ENCODE measurements at regions of chr2 and their contacts with region 1.

Region 1: DNA sequence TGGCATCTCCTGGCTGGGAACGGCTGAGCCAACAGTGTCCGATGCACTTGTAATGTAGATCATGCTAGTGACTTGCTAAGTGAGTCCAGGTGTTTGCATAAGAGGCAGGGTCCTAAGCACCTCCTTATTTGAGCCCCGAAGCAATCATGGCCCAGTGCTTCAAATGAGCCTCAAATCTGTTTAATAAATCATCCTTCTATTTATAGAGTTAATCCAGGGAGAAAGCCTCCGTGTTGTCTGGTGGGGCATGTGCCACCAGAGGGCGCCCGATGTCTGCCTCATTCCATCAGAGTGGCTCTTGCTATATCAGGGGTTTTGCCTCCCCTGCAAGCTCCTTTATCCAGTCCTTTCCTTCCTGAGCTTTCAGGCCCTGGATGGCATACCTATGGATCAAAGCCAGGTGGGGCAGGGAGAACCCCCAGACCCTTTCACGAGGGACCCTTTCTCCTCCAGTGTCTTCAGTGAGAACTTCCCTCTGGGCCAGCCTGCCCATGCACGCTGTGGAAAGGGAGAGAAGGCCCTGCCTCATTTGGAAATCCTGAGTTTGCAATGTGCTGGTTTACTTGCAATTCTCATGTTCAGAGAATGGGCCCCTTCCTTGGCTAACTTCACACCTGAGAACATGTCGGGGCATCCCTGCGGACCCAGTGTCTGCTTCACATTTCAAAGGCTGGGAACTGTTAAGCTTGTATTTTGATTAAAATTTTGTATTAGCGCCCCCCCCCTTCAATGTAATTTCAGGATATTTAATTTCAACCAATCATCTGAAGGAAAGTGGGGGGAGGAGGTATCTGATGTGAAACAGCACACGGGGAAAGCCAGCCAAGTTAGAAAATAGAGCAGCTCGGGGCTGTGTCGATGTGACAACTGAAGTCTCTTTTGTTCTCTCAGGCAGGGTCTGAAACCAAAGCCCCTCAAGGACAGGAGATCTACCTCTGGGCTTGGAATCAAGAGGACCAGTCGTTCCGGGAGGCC is 39.7 kb downstream of the RDH14 start:
- DNase-seq: peak; percentile 83
- H3K4me3 Mint-ChIP-seq: no peak overlapping the region
- H3K27ac Mint-ChIP-seq: no peak overlapping the region
- H3K4me1 Mint-ChIP-seq: peaks cover 10% of the 10 kb centered on the region
- H3K27me3 Mint-ChIP-seq: peaks cover 56% of the 10 kb centered on the region
- CTCF ChIP-seq: peak; percentile 89

Region 2: GRCh38 chr2:16625201-16625729 is 1895.5 kb before region 1 on chr2:
- CTCF ChIA-PET with region 1: no interaction called
- intact Hi-C with region 1: no loop called
- DNase-seq: no peak
- H3K4me3 Mint-ChIP-seq: no peak overlapping the region
- H3K27ac Mint-ChIP-seq: no peak overlapping the region
- H3K4me1 Mint-ChIP-seq: peaks cover 11% of the 10 kb centered on the region
- H3K27me3 Mint-ChIP-seq: peaks cover 71% of the 10 kb centered on the region
- CTCF ChIP-seq: no peak

Region 3: DNA sequence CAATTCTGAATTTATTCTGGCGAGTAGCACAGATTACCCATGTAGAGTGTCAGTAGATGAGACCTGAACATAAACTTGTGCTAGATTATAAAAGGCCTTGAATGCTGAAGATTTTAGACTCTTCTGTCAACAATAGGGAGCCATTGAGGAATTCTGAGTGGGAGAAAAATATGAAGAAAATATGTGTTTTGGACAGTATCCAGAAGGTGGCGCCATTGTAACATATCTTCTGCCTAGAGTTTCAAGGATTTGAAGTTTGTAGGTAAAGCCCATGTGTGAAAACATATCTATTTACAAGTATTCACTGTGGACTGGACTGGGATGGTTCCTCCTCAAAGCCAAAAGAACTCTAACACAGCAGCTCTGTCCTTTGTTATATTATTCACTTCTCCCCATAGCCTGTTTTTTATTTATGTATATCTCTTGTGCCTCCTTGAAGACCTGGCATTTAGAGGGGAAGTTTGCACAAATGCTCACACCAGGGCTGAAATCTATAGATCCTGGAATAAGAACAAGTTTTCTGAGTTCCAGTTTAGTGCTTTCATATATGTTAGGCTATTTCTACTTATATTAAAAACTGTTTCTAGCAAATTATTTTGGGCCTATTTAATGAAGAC is 85.2 kb before region 1 on chr2:
- CTCF ChIA-PET with region 1: no interaction called
- intact Hi-C with region 1: loop called (anchors 5 kb)
- DNase-seq: peak; percentile 46
- H3K4me3 Mint-ChIP-seq: no peak overlapping the region
- H3K27ac Mint-ChIP-seq: no peak overlapping the region
- H3K4me1 Mint-ChIP-seq: no peaks in the 10 kb centered on the region
- H3K27me3 Mint-ChIP-seq: peaks cover 43% of the 10 kb centered on the region
- CTCF ChIP-seq: peak; percentile 59

Region 4: DNA sequence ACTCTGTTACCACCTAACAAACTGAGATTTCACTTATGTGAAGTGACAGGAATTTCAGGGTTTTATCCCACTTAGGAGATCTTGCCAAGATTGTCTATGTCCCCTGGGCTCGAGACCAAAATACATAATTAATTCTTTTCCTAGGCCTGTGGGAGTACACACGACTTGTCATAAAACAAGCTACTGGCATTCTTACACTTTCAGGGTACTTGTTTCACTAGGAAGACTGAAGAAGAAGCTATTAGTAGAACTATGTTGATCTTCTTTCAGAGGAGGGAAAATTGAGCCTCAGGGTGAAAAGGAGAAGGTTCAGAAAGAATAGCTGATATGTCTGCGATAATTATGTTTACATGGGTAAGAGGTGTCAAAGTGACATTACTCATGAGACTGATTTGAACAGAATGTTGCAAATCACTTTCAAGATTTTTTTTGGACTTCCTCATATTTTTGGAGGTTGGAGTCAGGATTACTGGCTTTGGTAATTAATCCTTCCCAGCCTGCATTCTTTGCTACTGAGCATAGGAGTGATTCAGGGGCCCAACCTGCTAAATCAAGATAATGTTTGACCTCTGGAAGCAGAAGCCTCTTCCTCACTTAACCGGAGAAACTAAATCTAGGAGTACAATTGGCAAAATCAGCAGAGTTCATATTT is 308.6 kb after region 1 on chr2:
- CTCF ChIA-PET with region 1: no interaction called
- intact Hi-C with region 1: loop called (anchors 10 kb)
- DNase-seq: peak; percentile 17
- H3K4me3 Mint-ChIP-seq: no peak overlapping the region
- H3K27ac Mint-ChIP-seq: no peak overlapping the region
- H3K4me1 Mint-ChIP-seq: peaks cover 36% of the 10 kb centered on the region
- H3K27me3 Mint-ChIP-seq: no peaks in the 10 kb centered on the region
- CTCF ChIP-seq: no peak

Region 5: GRCh38 chr2:18883616-18884456 is 363.1 kb after region 1 on chr2:
- CTCF ChIA-PET with region 1: no interaction called
- intact Hi-C with region 1: loop called (anchors 5 kb)
- DNase-seq: peak; percentile 54
- H3K4me3 Mint-ChIP-seq: no peak overlapping the region
- H3K27ac Mint-ChIP-seq: no peak overlapping the region
- H3K4me1 Mint-ChIP-seq: peaks cover 8% of the 10 kb centered on the region
- H3K27me3 Mint-ChIP-seq: no peaks in the 10 kb centered on the region
- CTCF ChIP-seq: no peak

Measured in Calu3 (cell line).